ENCODE measurements at regions of chr3 and their contacts with region 1.

Region 1: DNA sequence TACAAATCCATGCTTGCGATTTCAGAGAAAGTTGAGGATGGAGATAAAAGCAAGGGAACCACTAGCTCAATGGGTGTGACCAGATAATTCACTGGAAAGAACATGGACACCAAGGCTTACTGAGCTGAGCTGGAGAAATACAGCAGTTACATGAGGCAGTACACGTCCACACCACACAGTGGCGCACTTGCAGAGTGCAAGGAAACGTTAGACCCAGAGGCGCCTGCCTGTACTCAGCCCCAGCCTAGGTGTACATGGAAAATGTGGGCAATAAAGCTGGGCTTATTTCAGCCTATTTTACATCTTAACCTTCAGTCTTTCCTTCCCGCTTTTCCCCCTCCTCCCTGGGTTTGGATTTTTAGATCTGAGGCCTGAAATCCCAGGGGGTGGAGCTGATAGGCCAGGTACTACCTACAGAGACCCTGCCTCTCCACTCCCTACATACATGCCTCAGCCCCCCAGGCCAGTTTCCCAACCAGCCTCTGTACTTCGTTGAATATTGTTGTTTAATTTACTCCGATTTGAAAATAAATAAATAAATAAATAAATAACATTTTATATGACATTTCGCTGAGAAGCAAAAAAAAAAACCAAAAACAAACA is 60.1 kb downstream of the PCOLCE2 start:
- DNase-seq: peak; percentile 72 to 84
- ATAC-seq: peak; percentile 99 to 100
- H3K4me3 ChIP-seq: no peak overlapping the region
- H3K27ac ChIP-seq: 0 out of 6 replicates have a peak overlapping the region, but pooled peaks of 1 of the 2 experiments have one; percentile 47
- H3K4me1 ChIP-seq: 0 out of 3 replicates have a peak, but pooled peaks cover 3% of the 10 kb centered on the region
- CTCF ChIP-seq: peak; percentile 92
- EP300 ChIP-seq: no peak
- POLR2A ChIP-seq: no peak
- RAD21 ChIP-seq: peak; percentile 93 to 95

Region 2: GRCh38 chr3:142817897-142818296 is 10.9 kb before region 1 on chr3:
- CTCF ChIA-PET with region 1: interaction called, 57 read pairs
- POLR2A ChIA-PET with region 1: no interaction called
- DNase-seq: no peak
- ATAC-seq: no peak
- H3K4me3 ChIP-seq: no peak overlapping the region
- H3K27ac ChIP-seq: no peak overlapping the region
- H3K4me1 ChIP-seq: no peaks in the 10 kb centered on the region
- CTCF ChIP-seq: no peak
- EP300 ChIP-seq: no peak
- POLR2A ChIP-seq: no peak
- RAD21 ChIP-seq: no peak

Region 3: GRCh38 chr3:142857056-142857455 is 28.3 kb after region 1 on chr3:
- CTCF ChIA-PET with region 1: interaction called, 89 read pairs
- POLR2A ChIA-PET with region 1: interaction called, 3 read pairs
- DNase-seq: peak; percentile 72 to 80
- ATAC-seq: peak; percentile 97 to 98
- H3K4me3 ChIP-seq: no peak overlapping the region
- H3K27ac ChIP-seq: no peak overlapping the region
- H3K4me1 ChIP-seq: peaks cover 28% of the 10 kb centered on the region
- CTCF ChIP-seq: peak; percentile 34; the same call in 2 of the 3 replicates
- EP300 ChIP-seq: no peak
- POLR2A ChIP-seq: no peak
- RAD21 ChIP-seq: peak in 1 of 2 experiments; percentile 38; a peak in 2 of 5 replicates

Region 4: DNA sequence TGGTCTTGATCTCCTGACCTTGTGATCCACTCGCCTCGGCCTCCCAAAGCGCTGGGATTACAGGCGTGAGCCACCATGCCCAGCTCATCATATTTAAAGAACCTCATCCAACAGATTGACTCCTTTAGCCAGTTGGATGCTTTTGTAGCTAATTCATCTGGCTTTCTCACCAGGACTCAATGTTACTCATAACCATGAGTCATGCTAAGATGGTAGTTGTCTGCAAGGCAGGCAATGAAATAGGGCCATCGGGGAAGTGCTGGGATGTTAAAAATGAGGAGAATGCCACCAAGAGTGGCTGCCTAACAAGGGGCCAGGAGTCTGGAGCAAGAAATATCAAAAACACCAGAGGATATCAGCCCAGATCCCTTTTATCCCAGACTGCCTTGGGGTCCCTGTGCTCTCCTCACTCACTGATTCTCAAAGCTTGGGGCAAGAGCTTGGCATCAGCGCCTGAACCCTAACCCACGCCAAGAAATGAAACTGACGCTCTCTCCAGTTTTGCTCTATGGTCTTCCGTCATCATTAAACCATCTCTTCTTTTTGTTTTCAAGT is 67.5 kb after region 1 on chr3:
- CTCF ChIA-PET with region 1: interaction called, 12 read pairs
- POLR2A ChIA-PET with region 1: no interaction called
- DNase-seq: peak; percentile 40 to 53
- ATAC-seq: peak; percentile 74 to 80
- H3K4me3 ChIP-seq: no peak overlapping the region
- H3K27ac ChIP-seq: 0 out of 6 replicates have a peak overlapping the region, but pooled peaks of 1 of the 2 experiments have one; percentile 32
- H3K4me1 ChIP-seq: peaks cover 7% of the 10 kb centered on the region; the same call in 2 of the 3 replicates
- CTCF ChIP-seq: no peak
- EP300 ChIP-seq: no peak
- POLR2A ChIP-seq: no peak
- RAD21 ChIP-seq: no peak

Region 5: GRCh38 chr3:142929109-142929508 is 100.3 kb after region 1 on chr3:
- CTCF ChIA-PET with region 1: interaction called, 29 read pairs
- POLR2A ChIA-PET with region 1: no interaction called
- DNase-seq: peak; percentile 78 to 82
- ATAC-seq: peak; percentile 87 to 92
- H3K4me3 ChIP-seq: no peak overlapping the region
- H3K27ac ChIP-seq: no peak overlapping the region
- H3K4me1 ChIP-seq: no peaks in the 10 kb centered on the region; the same call in 2 of the 3 replicates
- CTCF ChIP-seq: peak; percentile 87
- EP300 ChIP-seq: no peak
- POLR2A ChIP-seq: no peak
- RAD21 ChIP-seq: peak; percentile 72 to 76

Region 6: GRCh38 chr3:142976621-142977398 is 148.0 kb after region 1 on chr3:
- CTCF ChIA-PET with region 1: interaction called, 61 read pairs
- POLR2A ChIA-PET with region 1: no interaction called
- DNase-seq: peak; percentile 88 to 96
- ATAC-seq: peak; percentile 98 to 99
- H3K4me3 ChIP-seq: 0 out of 3 replicates have a peak overlapping the region, but pooled peaks have one; percentile 2
- H3K27ac ChIP-seq: peak overlapping the region; percentile 75 to 88
- H3K4me1 ChIP-seq: peaks cover 46% of the 10 kb centered on the region
- CTCF ChIP-seq: no peak
- EP300 ChIP-seq: 0 out of 5 replicates have a peak, but pooled peaks of 1 of the 2 experiments have one; percentile 32
- POLR2A ChIP-seq: no peak
- RAD21 ChIP-seq: no peak; a peak in 1 of 5 replicates

Region 7: GRCh38 chr3:143707848-143708247 is 879.0 kb after region 1 on chr3:
- CTCF ChIA-PET with region 1: no interaction called
- POLR2A ChIA-PET with region 1: no interaction called
- DNase-seq: peak in 1 of 2 experiments; percentile 4
- ATAC-seq: peak in 1 of 2 experiments; percentile 54; a peak in 2 of 6 replicates
- H3K4me3 ChIP-seq: no peak overlapping the region
- H3K27ac ChIP-seq: no peak overlapping the region
- H3K4me1 ChIP-seq: no peaks in the 10 kb centered on the region
- CTCF ChIP-seq: no peak
- EP300 ChIP-seq: no peak
- POLR2A ChIP-seq: no peak
- RAD21 ChIP-seq: no peak

Measured in A549 (cell line).